Right cardiac atrium (tissue), 5 donors: ENCODE measurements at regions of chr12 and their contacts with region 1.

Region 1: DNA sequence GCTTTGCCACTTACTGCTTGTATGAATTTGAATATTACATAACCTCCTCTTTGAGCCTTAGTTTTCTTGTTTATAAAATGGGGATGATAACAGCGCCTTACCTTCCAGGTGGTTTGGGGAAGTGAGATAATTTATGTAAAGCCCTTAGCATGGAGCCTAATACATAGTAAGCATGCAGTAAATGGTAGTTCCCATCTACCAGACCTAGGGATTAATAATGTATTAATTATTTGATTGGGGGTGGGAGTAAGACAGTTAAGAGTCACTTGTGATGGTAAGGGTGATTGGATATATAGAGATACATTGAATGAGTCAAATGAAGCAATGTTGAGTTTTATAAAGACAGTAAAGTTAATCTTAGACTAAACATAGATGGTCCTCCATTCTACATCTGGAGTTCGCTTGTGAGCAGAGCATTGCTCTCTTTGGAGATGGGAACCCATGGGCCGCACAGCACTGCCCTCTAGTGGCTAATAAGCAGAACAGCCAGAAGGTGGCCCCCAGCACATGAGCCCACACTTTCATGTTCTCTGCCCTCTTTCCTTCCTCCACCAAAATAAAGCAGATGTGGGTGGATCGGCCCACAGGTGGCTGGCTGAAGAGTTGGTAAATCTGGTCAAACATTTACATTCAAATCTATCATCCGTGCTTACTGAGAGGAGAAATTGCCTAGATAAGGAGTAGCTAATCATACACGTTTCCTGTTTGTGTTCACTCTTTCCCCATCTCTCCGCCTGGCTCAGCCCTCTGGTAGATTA is 26.5 kb upstream of the TAMALIN start:
- DNase-seq: peak in 2 of 3 donors; percentile 57 to 79
- ATAC-seq: peak; percentile 86 to 88
- H3K4me3 ChIP-seq: no peak overlapping the region
- H3K27ac ChIP-seq: no peak overlapping the region
- H3K4me1 ChIP-seq: no peaks in the 10 kb centered on the region
- H3K27me3 ChIP-seq: no peaks in the 10 kb centered on the region

Region 2: DNA sequence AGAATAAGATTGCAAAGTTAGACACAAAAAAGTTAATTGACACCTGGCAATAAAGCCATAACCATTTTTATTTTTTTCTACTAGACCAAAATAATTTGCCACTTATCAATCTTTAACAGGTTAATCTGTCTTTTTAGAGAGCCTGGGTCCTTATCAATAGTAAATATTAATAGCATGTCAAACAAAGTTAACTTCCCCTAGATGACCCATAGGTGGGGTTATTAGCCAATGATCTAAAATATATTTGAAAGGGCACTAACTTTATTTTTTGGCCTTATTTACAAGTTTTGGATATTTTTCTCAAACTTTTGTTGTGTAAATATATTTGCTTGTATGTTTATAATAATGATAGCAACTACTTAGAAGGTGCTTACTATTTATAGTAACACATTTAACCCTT is 88.4 kb before region 1 on chr12:
- intact Hi-C with region 1: loop called (anchors 2 to 5 kb)
- DNase-seq: no peak
- ATAC-seq: no peak
- H3K4me3 ChIP-seq: no peak overlapping the region
- H3K27ac ChIP-seq: no peak overlapping the region
- H3K4me1 ChIP-seq: peaks cover 5% of the 10 kb centered on the region
- H3K27me3 ChIP-seq: no peaks in the 10 kb centered on the region

Region 3: DNA sequence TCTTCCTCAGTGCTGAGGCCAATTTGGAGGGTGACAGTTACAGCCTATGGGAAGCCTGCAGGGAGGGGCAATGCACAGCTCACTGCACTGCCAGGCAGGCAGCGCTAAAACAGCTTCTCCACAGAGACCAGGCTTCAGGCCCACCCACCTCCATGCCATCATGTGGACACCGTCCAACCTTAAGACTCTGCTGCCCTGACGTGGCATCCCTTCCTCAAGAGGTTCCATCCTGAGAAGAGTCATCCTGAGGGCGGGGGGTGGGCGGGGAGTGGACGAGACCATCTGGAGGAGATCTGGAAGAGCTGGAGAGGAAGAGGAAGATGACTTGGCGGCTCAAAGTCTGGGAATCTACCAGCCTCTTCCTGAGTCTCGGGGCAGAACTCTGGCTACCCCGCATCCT is 81.3 kb before region 1 on chr12:
- intact Hi-C with region 1: loop called (anchors 2 to 5 kb)
- DNase-seq: no peak
- ATAC-seq: no peak
- H3K4me3 ChIP-seq: no peak overlapping the region
- H3K27ac ChIP-seq: no peak overlapping the region
- H3K4me1 ChIP-seq: peaks cover 5% of the 10 kb centered on the region
- H3K27me3 ChIP-seq: no peaks in the 10 kb centered on the region

Region 4: GRCh38 chr12:52486166-52487105 is 506.2 kb after region 1 on chr12:
- intact Hi-C with region 1: no loop called
- DNase-seq: no peak
- ATAC-seq: no peak
- H3K4me3 ChIP-seq: no peak overlapping the region
- H3K27ac ChIP-seq: no peak overlapping the region
- H3K4me1 ChIP-seq: no peaks in the 10 kb centered on the region
- H3K27me3 ChIP-seq: peaks cover 3% of the 10 kb centered on the region